ENCODE measurements at regions of chr12 and their contacts with region 1.

Region 1: DNA sequence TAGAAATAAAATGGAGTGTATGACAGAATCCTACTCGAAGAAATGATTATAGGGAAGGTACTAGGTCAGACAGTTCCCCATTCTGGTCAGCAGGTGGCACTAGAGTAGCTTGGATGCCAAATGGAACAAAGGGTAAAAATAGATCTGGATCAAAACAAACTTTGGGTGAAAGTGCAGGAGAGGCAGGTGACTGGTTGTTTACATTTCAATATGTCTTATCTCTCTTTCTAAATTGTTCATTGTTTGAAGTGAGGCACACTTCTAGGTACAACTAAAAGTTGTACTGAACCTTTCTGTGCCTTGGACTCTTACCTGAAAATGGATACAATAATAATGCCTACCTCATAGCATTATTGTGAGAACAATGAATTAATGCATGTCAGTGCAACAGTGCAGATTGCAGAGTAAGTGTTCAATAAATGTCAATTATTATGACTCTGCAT is 62.0 kb upstream of the OSBPL8 start:
- DNase-seq: peak; percentile 78
- H3K4me3 Mint-ChIP-seq: no peak overlapping the region
- H3K27ac Mint-ChIP-seq: no peak overlapping the region
- H3K4me1 Mint-ChIP-seq: peaks cover 4% of the 10 kb centered on the region
- H3K27me3 Mint-ChIP-seq: peaks cover 2% of the 10 kb centered on the region

Region 2: GRCh38 chr12:76763743-76764675 is 142.4 kb after region 1 on chr12 and contains the start of gene ZDHHC17:
- CTCF ChIA-PET with region 1: interaction called, 10 read pairs
- POLR2A ChIA-PET with region 1: no interaction called
- intact Hi-C with region 1: no loop called
- DNase-seq: peak; percentile 93
- H3K4me3 Mint-ChIP-seq: peak within 1 kb of the TSS; percentile 99
- H3K27ac Mint-ChIP-seq: peak within 1 kb of the TSS; percentile 93
- H3K4me1 Mint-ChIP-seq: peaks cover 34% of the 10 kb centered on the region
- H3K27me3 Mint-ChIP-seq: no peaks in the 10 kb centered on the region
- total RNA-seq, gene ZDHHC17: 18.8 to 20.0 TPM

Region 3: GRCh38 chr12:76878899-76879709 is 257.5 kb after region 1 on chr12 and contains the start of gene CSRP2:
- CTCF ChIA-PET with region 1: no interaction called
- POLR2A ChIA-PET with region 1: no interaction called
- intact Hi-C with region 1: loop called (anchors 5 kb)
- DNase-seq: peak; percentile 80
- H3K4me3 Mint-ChIP-seq: peak within 1 kb of the TSS; percentile 83
- H3K27ac Mint-ChIP-seq: no peak within 1 kb of the TSS
- H3K4me1 Mint-ChIP-seq: peaks cover 2% of the 10 kb centered on the region
- H3K27me3 Mint-ChIP-seq: peaks cover 47% of the 10 kb centered on the region
- total RNA-seq, gene CSRP2: 0.33 to 0.41 TPM

Region 4: GRCh38 chr12:76927170-76927784 is 305.7 kb after region 1 on chr12:
- CTCF ChIA-PET with region 1: interaction called, 3 read pairs
- POLR2A ChIA-PET with region 1: no interaction called
- intact Hi-C with region 1: loop called (anchors 1 kb)
- DNase-seq: peak; percentile 50
- H3K4me3 Mint-ChIP-seq: no peak overlapping the region
- H3K27ac Mint-ChIP-seq: no peak overlapping the region
- H3K4me1 Mint-ChIP-seq: no peaks in the 10 kb centered on the region
- H3K27me3 Mint-ChIP-seq: peaks cover 5% of the 10 kb centered on the region

Region 5: DNA sequence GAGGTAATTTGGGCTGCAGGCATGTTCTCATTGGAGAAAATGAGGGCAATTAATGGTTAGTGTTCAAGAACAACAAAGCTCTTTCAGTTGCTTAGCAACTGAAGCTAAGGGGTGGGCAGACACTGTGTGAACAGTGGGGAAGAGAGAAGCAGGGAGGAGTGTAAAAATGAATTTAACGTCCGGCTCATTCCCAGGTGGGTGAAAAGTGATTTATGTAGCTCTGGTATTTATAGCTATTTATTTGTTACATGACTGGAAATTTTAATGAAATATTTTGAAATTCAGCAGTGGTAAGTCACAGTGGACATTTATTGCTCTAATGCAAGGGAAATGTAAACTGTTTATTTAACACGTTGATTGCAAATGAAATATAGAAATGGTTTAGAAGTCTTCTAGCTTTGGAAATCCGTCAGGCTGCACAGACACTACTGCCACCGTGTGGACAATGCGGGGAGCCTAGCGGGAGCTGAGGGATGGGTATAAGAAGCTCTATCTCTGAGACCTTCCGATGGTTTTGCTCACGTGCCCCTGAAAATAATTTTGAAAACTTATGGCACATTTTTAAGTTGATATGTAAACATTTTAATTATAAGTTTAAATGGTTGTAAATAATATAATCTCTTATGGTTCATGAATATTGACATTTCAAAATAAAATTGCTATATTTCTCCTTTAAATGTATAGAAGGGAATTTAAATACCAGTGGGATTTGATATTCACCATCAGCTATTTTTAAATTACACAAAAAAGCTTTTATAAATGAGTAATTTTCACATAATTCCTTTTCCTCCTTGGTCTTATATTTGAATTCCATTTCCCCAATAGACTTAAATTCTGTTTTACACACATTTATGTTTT is 389.3 kb after region 1 on chr12:
- CTCF ChIA-PET with region 1: interaction called, 56 read pairs
- POLR2A ChIA-PET with region 1: no interaction called
- intact Hi-C with region 1: loop called (anchors 1 kb)
- DNase-seq: peak; percentile 78
- H3K4me3 Mint-ChIP-seq: no peak overlapping the region
- H3K27ac Mint-ChIP-seq: no peak overlapping the region
- H3K4me1 Mint-ChIP-seq: peaks cover 3% of the 10 kb centered on the region
- H3K27me3 Mint-ChIP-seq: peaks cover 16% of the 10 kb centered on the region

Measured in activated CD4-positive, alpha-beta memory T cell treated with anti-CD3 and anti-CD28 coated beads for 36 hours (primary cell).